Heart right ventricle (tissue), 16 donors: ENCODE measurements at regions of chr12 and their contacts with region 1.

Region 1: GRCh38 chr12:107207931-107208525 is 114.7 kb upstream of the CRY1 start:
- DNase-seq: no peak
- ATAC-seq: no peak
- H3K4me3 ChIP-seq: no peak overlapping the region
- H3K27ac ChIP-seq: no peak overlapping the region
- H3K4me1 ChIP-seq: no peaks in the 10 kb centered on the region
- H3K27me3 ChIP-seq: peaks cover 0 to 8% (median 6%) of the 10 kb centered on the region in 7 donors
- CTCF ChIP-seq: no peak

Region 2: DNA sequence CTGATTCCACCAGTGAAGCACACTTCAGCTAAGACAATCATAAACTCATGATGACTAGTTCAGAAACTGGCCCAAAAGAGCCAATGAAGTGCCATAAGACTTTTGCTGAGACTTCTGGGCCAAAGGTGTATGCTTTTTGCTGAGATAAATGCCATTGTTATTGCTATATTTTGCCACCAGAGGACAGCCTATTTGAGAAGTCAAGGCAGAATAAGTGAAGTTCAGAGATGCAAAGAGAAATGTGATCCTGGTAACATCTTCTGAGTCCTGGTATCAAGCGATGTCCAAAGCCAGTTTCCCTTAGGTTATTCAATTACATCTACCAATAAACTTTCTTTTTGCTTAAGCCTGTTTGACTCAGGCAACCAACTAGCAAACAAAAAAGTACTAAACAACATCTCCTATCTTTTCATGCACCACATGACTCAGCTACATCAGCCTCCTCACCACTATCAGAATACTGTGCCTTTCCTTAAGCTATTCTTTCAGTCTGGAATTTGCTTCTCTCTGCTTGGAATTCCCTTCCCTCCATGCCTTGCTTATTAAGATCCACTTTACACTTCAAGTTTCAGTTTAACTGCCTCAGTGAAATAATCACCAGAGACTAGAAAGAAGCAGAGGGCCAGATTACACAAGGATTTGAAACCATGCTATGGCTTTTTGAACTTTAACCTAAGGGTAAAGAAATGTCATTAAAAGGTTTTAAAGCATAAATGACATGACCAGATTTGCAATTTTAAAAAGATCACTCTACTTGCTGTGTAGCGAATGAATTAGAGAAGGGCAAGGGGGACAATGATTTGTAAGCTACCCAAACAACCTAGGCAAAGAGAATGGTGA is 128.6 kb before region 1 on chr12:
- intact Hi-C with region 1: no loop called
- DNase-seq: no peak
- ATAC-seq: no peak
- H3K4me3 ChIP-seq: no peak overlapping the region
- H3K27ac ChIP-seq: no peak overlapping the region
- H3K4me1 ChIP-seq: peaks cover 0 to 27% (median 11%) of the 10 kb centered on the region in 9 donors
- H3K27me3 ChIP-seq: no peaks in the 10 kb centered on the region
- CTCF ChIP-seq: peak in 7 of 9 donors; percentile 10 to 49 (median 27)

Region 3: GRCh38 chr12:107264667-107265066 is 56.6 kb after region 1 on chr12:
- intact Hi-C with region 1: loop called in 1 of 10 experiments (anchors 2 kb)
- DNase-seq: no peak
- ATAC-seq: no peak
- H3K4me3 ChIP-seq: no peak overlapping the region
- H3K27ac ChIP-seq: no peak overlapping the region
- H3K4me1 ChIP-seq: no peaks in the 10 kb centered on the region
- H3K27me3 ChIP-seq: peaks cover 0 to 19% (median 0%) of the 10 kb centered on the region in 7 donors
- CTCF ChIP-seq: no peak